Right ventricle myocardium inferior (tissue), 1 donor: ENCODE measurements at regions of chr11 and their contacts with region 1.

Region 1: GRCh38 chr11:64878494-64879243 is at the start of gene EHD1:
- DNase-seq: peak; percentile 99
- ATAC-seq: peak; percentile 94
- total RNA-seq, gene EHD1: 56.0 TPM

Region 2: DNA sequence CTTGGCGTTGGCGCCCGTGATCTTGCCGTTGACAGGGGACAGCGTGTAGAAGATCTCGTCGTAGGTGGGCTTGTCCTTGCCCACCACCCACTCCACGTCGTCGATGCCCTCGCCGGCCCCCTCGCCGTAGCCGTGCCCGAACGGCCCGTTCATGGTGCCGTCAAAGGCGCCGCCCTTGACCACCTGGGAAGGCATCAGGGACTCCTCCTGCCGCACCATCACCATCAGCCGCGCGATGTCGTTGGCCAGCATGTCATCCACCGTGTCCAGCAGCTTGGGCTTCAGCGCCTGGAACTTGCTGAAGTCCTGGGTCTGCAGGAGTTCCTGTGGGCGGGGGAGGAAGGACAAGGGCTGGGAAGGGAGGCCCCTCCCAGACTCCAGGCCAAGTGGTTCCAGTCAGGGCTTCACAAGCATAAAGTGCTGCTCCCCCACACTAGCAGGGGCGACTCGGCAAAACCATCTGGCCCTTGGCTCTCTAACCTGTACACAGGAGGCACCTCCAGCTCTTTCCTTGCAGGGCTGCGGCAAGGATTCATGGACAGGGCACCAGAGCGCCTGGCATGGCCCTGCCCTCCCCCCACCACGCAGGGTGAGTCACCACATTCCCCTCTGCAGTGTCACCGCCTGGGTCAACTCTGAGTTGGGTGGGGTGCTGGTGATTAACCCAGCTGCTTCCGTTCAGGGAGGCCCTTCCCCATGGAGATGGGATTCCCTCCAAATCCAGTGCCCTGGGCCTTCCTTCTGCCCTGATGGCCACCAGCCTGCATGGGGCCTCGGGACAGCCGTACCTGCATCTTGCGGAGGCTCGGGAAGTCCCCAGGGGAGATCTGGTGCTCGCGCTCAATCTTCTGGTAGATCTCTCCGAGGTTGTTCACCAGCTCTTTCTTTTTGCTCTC is 23.9 kb before region 1 on chr11:
- intact Hi-C with region 1: loop called (anchors 2 kb)
- DNase-seq: peak; percentile 89
- ATAC-seq: peak; percentile 66

Region 3: DNA sequence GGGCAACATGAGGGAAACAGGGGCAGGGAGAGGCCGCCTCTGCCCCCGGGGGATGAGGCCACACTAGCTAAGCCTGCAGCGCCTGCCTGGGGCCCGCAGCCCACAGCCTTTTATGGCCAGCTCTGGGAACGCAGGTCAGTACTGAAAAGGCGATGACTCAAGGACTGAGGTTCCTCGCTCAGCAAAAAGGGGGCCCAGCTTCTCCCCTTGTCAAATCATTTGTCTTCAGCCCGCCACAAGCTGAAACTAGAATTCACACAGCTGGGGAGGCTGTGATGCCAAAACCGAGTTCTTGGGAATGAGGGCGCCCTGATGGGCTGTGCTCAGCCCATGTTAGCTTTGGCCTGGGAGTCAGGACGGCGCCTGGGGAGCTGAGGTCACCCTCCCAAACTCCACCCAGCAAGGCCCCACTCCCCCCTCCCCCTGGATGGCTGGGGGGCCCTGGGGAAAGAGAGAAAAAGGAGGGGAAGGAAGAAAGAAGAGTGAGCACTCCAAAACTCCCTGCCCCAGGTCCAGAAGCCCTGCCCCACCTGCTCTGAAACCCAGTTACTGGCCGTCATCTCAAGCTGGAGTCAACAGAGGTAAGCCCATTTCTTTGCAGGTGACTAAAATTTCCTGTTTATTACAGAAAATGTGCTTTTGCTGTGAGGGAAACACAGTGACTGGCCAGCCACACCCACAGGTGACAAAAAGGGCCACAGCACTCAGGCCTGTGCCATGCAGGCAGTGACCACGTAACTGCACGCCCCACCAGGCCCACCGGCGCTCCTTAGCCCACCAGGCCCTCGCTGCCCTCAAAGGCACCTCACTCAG is 14.0 kb before region 1 on chr11:
- intact Hi-C with region 1: loop called (anchors 1 kb)
- DNase-seq: peak; percentile 84
- ATAC-seq: peak; percentile 85

Region 4: DNA sequence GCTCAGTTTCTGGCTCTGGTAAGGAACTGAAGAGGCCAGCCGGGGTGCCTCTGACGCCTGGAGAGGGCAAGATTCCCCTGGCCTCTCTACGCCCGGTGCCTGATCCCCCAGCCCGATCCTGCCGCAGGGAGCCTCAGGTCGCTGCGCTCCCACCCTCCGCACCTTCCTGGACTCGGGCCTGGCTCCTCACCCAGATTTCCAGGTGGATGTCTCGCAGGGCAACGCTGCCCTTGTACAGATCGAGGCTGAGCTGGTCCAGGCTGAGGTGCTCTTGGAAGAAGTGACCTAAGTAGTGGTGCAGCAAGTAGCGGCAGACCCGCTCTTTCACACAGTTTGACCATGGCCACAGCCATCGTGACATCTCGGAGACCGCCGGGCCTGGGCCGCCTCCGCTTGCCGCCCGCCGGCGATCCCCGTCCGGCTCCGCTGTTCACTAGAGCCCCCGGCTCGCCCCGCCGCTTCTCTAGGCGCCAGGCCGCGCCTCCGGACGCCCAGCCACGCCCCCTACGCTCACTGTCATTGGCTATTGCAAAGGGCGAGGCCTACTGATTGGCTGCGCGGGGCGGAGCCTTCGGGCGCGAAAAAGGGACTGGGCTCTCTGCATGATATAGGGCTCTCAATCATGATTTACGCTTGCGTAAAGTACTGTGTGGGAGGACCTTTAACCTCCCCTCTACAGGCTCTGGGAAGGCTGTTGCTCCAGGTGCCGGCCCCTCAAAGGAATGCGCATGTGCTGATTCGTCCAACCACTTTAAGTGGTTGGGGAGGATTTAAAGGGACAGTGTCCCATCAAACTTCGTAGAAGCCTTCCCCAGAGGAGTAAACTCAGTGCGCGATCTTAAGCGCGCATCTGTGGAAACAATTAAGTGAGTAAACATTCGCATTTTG is 38.4 kb after region 1 on chr11 and contains the start of gene ATG2A:
- intact Hi-C with region 1: loop called (anchors 1 kb)
- DNase-seq: peak; percentile 100
- ATAC-seq: peak; percentile 99
- total RNA-seq, gene ATG2A: 10.7 TPM